ENCODE measurements at regions of chr3 and their contacts with region 1.

Region 1: GRCh38 chr3:66053550-66054094 is 14.9 kb upstream of the MAGI1 start:
- DNase-seq: peak; percentile 68 to 76
- H3K4me3 ChIP-seq: no peak overlapping the region
- H3K27ac ChIP-seq: peak overlapping the region; percentile 48 to 76 (median 55)
- H3K4me1 ChIP-seq: peaks cover 7 to 16% of the 10 kb centered on the region in 2 donors
- H3K27me3 ChIP-seq: no peaks in the 10 kb centered on the region
- CTCF ChIP-seq: no peak
- POLR2A ChIP-seq: no peak

Region 2: GRCh38 chr3:66010739-66011655 is 42.6 kb before region 1 on chr3:
- intact Hi-C with region 1: no loop called
- DNase-seq: peak; percentile 65 to 70
- H3K4me3 ChIP-seq: no peak overlapping the region
- H3K27ac ChIP-seq: peak overlapping the region; percentile 53 to 77 (median 68)
- H3K4me1 ChIP-seq: peaks cover 15 to 27% of the 10 kb centered on the region in 2 donors
- H3K27me3 ChIP-seq: no peaks in the 10 kb centered on the region
- CTCF ChIP-seq: no peak
- POLR2A ChIP-seq: no peak

Region 3: GRCh38 chr3:66121318-66121717 is 67.7 kb after region 1 on chr3:
- intact Hi-C with region 1: loop called (anchors 10 kb)
- DNase-seq: no peak
- H3K4me3 ChIP-seq: no peak overlapping the region
- H3K27ac ChIP-seq: peak overlapping the region in 1 of 3 donors; percentile 20
- H3K4me1 ChIP-seq: peaks cover 16 to 17% of the 10 kb centered on the region in 2 donors
- H3K27me3 ChIP-seq: no peaks in the 10 kb centered on the region
- CTCF ChIP-seq: no peak
- POLR2A ChIP-seq: no peak

Region 4: DNA sequence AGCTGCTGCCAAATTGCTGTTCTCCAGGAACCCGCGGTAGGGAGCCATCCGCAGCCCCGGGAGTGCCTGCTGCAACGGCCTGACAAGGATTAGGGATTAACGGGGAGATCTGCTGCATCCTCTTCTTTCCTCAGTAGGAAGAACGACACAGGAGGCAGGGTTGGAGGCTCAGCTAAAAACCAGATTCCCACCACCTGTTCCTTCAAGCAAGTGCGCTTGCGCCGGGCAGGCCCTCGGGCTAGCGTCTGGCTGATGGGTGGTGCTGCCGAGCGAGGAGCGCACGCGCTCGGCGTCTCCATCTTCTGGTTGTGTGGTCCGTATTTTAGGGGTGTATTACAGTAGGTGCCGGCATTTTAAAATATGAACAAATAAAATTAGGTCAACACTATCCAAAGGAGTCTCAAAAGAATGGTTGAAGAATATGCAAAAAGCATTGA is 141.7 kb after region 1 on chr3:
- intact Hi-C with region 1: no loop called
- DNase-seq: peak; percentile 65 to 72
- H3K4me3 ChIP-seq: no peak overlapping the region
- H3K27ac ChIP-seq: no peak overlapping the region
- H3K4me1 ChIP-seq: no peaks in the 10 kb centered on the region
- H3K27me3 ChIP-seq: no peaks in the 10 kb centered on the region
- CTCF ChIP-seq: peak in 1 of 6 experiments; percentile 32
- POLR2A ChIP-seq: no peak